Activated CD4-positive, alpha-beta memory T cell treated with anti-CD3 and anti-CD28 coated beads for 36 hours (primary cell): ENCODE measurements at regions of chr1 and their contacts with region 1.

Region 1: GRCh38 chr1:116817582-116818064 is 63.4 kb downstream of the CD2 start:
- DNase-seq: peak; percentile 89
- H3K4me3 Mint-ChIP-seq: peak overlapping the region; percentile 60
- H3K27ac Mint-ChIP-seq: peak overlapping the region; percentile 96
- H3K4me1 Mint-ChIP-seq: peaks cover 67% of the 10 kb centered on the region
- H3K27me3 Mint-ChIP-seq: no peaks in the 10 kb centered on the region

Region 2: GRCh38 chr1:116504308-116505156 is 313.1 kb before region 1 on chr1:
- CTCF ChIA-PET with region 1: no interaction called
- POLR2A ChIA-PET with region 1: no interaction called
- intact Hi-C with region 1: loop called (anchors 5 kb)
- DNase-seq: peak; percentile 92
- H3K4me3 Mint-ChIP-seq: peak overlapping the region; percentile 38
- H3K27ac Mint-ChIP-seq: peak overlapping the region; percentile 97
- H3K4me1 Mint-ChIP-seq: peaks cover 65% of the 10 kb centered on the region
- H3K27me3 Mint-ChIP-seq: no peaks in the 10 kb centered on the region

Region 3: DNA sequence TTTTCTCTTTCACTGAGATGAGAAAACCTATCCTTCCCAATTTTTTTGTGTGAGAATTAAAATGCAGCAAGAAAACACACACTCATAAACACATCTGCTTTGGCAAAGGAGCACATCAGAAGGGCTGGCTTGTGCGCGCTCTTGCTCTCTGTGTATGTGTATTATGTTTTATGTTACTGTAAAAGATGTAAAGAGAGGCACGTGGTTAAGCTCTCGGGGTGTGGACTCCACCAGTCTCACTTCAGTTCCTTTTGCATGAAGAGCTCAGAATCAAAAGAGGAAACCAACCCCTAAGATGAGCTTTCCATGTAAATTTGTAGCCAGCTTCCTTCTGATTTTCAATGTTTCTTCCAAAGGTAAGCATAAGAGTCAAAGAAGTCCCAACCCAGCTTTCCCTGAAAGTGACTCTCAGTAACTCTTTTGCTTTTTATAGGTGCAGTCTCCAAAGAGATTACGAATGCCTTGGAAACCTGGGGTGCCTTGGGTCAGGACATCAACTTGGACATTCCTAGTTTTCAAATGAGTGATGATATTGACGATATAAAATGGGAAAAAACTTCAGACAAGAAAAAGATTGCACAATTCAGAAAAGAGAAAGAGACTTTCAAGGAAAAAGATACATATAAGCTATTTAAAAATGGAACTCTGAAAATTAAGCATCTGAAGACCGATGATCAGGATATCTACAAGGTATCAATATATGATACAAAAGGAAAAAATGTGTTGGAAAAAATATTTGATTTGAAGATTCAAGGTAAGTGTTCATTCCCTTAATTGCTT is 63.2 kb before region 1 on chr1 and contains the start of gene CD2:
- CTCF ChIA-PET with region 1: interaction called, 9 read pairs
- POLR2A ChIA-PET with region 1: interaction called, 44 read pairs
- intact Hi-C with region 1: no loop called
- DNase-seq: peak; percentile 78
- H3K4me3 Mint-ChIP-seq: peak within 1 kb of the TSS; percentile 99
- H3K27ac Mint-ChIP-seq: peak within 1 kb of the TSS; percentile 99
- H3K4me1 Mint-ChIP-seq: peaks cover 40% of the 10 kb centered on the region
- H3K27me3 Mint-ChIP-seq: no peaks in the 10 kb centered on the region
- total RNA-seq, gene CD2: 335 to 355 TPM

Region 4: DNA sequence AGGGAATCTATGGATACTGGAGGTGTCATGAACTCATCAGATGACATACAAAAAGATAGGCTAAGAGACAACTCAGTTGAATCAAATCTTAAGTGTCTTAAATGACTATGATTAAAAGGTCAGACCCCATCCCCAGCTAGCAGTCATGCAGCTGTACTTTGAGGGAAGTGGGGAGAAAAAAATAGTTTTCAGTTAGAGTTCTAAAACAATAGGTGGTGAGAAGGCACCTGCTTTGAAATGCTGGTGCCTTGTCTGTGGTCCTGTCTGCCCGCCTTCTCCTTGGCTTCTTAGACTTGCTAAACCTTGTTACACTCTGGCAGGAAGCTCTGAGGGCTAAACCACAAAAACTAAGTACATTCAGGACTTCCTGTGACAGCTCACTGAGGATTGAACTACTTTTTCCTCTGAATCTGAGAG is 48.1 kb before region 1 on chr1:
- CTCF ChIA-PET with region 1: interaction called, 78 read pairs
- POLR2A ChIA-PET with region 1: interaction called, 232 read pairs
- intact Hi-C with region 1: loop called (anchors 1 kb)
- DNase-seq: peak; percentile 85
- H3K4me3 Mint-ChIP-seq: peak overlapping the region; percentile 99
- H3K27ac Mint-ChIP-seq: peak overlapping the region; percentile 99
- H3K4me1 Mint-ChIP-seq: peaks cover 95% of the 10 kb centered on the region
- H3K27me3 Mint-ChIP-seq: peaks cover 2% of the 10 kb centered on the region

Region 5: GRCh38 chr1:116806245-116806644 is 11.4 kb before region 1 on chr1:
- CTCF ChIA-PET with region 1: interaction called, 34 read pairs
- POLR2A ChIA-PET with region 1: interaction called, 84 read pairs
- intact Hi-C with region 1: loop called (anchors 1 kb)
- DNase-seq: peak; percentile 91
- H3K4me3 Mint-ChIP-seq: peak overlapping the region; percentile 79
- H3K27ac Mint-ChIP-seq: peak overlapping the region; percentile 99
- H3K4me1 Mint-ChIP-seq: peaks cover 78% of the 10 kb centered on the region
- H3K27me3 Mint-ChIP-seq: no peaks in the 10 kb centered on the region

Region 6: DNA sequence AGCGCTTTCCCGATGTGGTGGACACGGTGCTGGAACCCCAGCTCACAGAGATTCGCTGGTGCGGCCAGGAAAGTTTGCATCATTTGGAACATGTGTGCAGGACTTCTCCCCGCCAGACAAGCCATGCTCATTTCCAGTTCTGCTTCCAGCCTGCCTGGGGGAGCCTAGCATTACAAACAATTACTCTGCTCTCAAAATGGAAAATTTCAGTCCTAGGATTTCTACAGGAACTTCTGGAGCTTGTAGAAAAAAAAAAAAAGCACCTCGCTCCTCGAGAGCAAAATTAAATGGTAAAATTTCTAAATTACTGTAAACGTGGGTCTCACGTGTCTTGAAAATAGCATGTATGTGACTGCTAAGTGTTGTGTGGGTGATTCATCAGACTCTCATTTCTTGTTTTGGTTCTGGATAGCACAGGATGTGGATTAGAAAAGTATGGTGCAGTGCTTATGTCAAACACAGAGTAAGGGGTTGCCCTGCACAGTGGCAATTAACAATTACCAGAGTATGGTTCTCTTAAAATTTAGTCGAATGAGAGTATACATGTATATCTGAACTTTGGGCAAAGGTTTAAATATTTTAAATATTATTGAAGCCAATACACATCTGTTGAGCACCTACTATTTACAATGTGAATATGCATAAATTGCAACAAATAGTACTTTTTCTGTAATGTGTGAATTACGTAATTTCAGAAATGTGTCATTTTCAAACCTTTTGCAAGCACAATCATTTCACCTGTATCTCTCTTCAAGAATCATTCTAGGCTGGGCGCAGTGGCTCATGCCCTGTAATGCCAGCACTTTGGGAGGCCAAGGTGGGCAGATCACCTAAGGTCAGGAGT is 30.3 kb after region 1 on chr1:
- CTCF ChIA-PET with region 1: no interaction called
- POLR2A ChIA-PET with region 1: no interaction called
- intact Hi-C with region 1: no loop called
- DNase-seq: peak; percentile 61
- H3K4me3 Mint-ChIP-seq: no peak overlapping the region
- H3K27ac Mint-ChIP-seq: peak overlapping the region; percentile 34
- H3K4me1 Mint-ChIP-seq: peaks cover 27% of the 10 kb centered on the region
- H3K27me3 Mint-ChIP-seq: no peaks in the 10 kb centered on the region